Caco-2 (cell line): ENCODE measurements at regions of chr4 and their contacts with region 1.

Region 1: GRCh38 chr4:146191766-146192458 is 16.4 kb downstream of the LSM6 start:
- DNase-seq: peak; percentile 50 to 68
- H3K4me3 ChIP-seq: no peak overlapping the region
- H3K4me3 Mint-ChIP-seq: no peak overlapping the region
- H3K27ac Mint-ChIP-seq: no peak overlapping the region
- H3K4me1 ChIP-seq: peaks cover 12% of the 10 kb centered on the region
- H3K4me1 Mint-ChIP-seq: peaks cover 10% of the 10 kb centered on the region
- H3K27me3 ChIP-seq: no peaks in the 10 kb centered on the region
- H3K27me3 Mint-ChIP-seq: no peaks in the 10 kb centered on the region
- CTCF ChIP-seq: no peak

Region 2: DNA sequence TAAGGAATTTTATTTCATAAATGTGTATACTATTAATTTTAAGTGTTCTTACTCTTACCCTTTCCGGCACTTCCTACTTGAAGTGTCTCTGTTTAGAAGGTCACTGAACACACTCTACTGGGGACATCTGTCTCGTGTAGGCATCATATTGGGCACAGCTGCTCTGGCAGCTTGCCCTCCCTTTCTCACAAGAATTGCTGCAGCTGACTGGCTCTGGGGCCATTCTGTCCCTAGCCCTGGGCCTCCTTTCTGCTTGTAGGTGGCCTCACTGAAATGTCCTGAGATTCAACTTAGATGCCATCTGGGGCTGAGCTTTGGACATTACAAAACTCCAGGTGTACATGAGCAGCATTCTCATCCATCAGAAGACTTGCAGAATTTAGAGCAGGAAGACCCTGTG is 660.7 kb before region 1 on chr4:
- CTCF ChIA-PET with region 1: no interaction called
- POLR2A ChIA-PET with region 1: no interaction called
- intact Hi-C with region 1: no loop called
- DNase-seq: no peak
- H3K4me3 ChIP-seq: no peak overlapping the region
- H3K4me3 Mint-ChIP-seq: no peak overlapping the region
- H3K27ac Mint-ChIP-seq: no peak overlapping the region
- H3K4me1 ChIP-seq: no peaks in the 10 kb centered on the region
- H3K4me1 Mint-ChIP-seq: no peaks in the 10 kb centered on the region
- H3K27me3 ChIP-seq: no peaks in the 10 kb centered on the region
- H3K27me3 Mint-ChIP-seq: no peaks in the 10 kb centered on the region
- CTCF ChIP-seq: no peak

Region 3: DNA sequence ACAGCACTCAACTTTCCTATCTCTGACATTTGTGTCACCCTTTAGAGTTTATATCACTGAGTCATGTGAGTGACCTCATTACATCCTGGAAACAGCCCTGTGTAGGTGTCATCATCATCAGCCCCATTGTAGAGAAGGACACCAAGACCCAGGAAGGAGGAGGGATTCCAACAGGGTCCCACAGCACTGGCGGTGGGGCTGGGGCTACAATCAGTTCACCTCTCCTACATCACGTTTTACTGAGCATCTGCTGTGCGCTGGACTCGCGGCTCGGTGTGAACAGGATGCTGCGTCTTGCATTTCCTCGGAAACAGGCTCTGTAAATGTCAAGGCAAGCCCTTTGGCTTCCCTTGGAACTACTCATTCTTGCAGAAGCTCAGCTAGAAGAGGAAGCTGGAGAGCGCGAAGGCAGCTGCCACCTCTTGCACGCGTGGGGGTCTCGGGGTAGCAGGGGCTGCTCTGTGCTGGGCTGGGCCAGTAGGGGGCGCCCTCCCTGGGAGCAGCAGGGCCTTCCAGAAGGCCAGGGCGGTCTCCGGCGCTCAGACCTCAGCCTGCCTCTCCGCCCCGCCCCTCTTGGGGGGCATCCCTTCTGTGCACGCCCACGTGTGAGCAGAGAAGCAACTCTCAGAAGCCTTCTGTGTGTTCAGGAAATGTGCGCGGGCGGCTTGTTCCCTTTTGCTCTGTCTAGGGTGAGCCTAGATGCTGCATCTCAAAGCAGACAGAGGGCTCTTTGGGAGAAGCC is 51.4 kb after region 1 on chr4:
- CTCF ChIA-PET with region 1: no interaction called
- POLR2A ChIA-PET with region 1: no interaction called
- intact Hi-C with region 1: loop called (anchors 1 kb)
- DNase-seq: no peak
- H3K4me3 ChIP-seq: no peak overlapping the region
- H3K4me3 Mint-ChIP-seq: no peak overlapping the region
- H3K27ac Mint-ChIP-seq: no peak overlapping the region
- H3K4me1 ChIP-seq: peaks cover 13% of the 10 kb centered on the region; the same call in 1 of the 2 replicates
- H3K4me1 Mint-ChIP-seq: peaks cover 5% of the 10 kb centered on the region
- H3K27me3 ChIP-seq: no peaks in the 10 kb centered on the region
- H3K27me3 Mint-ChIP-seq: no peaks in the 10 kb centered on the region
- CTCF ChIP-seq: peak in 1 of 2 experiments; percentile 4

Region 4: DNA sequence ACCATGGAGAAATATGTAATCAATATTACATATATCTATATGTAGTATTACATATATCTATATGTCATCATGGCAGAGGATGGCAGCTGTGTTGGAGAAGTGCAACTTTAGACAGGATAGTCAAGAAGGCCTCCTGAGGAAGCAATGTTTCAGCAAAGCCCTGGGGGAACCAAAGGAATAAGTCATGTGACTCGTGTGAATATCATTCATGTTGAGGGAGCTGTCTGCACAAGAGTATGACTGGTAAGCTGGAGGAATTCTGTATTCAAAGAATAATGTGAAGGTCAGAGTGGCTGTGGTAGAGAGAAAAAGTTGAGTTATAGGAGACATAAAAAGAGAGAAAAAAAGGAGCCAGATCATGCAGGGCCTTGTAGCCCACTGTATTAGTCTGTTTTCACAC is 1196.1 kb after region 1 on chr4:
- CTCF ChIA-PET with region 1: no interaction called
- POLR2A ChIA-PET with region 1: no interaction called
- intact Hi-C with region 1: no loop called
- DNase-seq: no peak
- H3K4me3 ChIP-seq: no peak overlapping the region
- H3K4me3 Mint-ChIP-seq: no peak overlapping the region
- H3K27ac Mint-ChIP-seq: no peak overlapping the region
- H3K4me1 ChIP-seq: no peaks in the 10 kb centered on the region
- H3K4me1 Mint-ChIP-seq: no peaks in the 10 kb centered on the region
- H3K27me3 ChIP-seq: no peaks in the 10 kb centered on the region
- H3K27me3 Mint-ChIP-seq: no peaks in the 10 kb centered on the region
- CTCF ChIP-seq: no peak